ENCODE measurements at regions of chr6 and their contacts with region 1.

Region 1: DNA sequence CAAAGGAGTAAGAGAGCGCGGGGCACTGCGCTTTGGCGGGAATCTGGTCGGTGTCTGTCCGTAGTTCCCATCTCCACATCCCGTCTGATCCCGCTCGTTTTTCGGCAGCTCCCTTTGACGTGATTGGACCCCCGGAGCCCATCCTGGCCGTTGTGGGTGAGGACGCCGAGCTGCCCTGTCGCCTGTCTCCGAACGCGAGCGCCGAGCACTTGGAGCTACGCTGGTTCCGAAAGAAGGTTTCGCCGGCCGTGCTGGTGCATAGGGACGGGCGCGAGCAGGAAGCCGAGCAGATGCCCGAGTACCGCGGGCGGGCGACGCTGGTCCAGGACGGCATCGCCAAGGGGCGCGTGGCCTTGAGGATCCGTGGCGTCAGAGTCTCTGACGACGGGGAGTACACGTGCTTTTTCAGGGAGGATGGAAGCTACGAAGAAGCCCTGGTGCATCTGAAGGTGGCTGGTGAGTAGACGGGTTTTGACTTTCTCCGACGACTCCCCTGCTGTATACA is 1.4 kb downstream of the BTN1A1 start:
- DNase-seq: peak; percentile 65
- ATAC-seq: peak; percentile 66
- H3K4me3 ChIP-seq: peak overlapping the region; percentile 8 to 65 (median 56)
- H3K4me3 Mint-ChIP-seq: peak overlapping the region; percentile 90
- H3K27ac ChIP-seq: no peak overlapping the region
- H3K27ac Mint-ChIP-seq: peak overlapping the region; percentile 37
- H3K4me1 ChIP-seq: peaks cover 26 to 27% of the 10 kb centered on the region in 2 donors
- H3K4me1 Mint-ChIP-seq: peaks cover 27% of the 10 kb centered on the region
- H3K27me3 ChIP-seq: peaks cover 0 to 6% (median 0%) of the 10 kb centered on the region in 4 experiments
- H3K27me3 Mint-ChIP-seq: no peaks in the 10 kb centered on the region
- CTCF ChIP-seq: no peak

Region 2: DNA sequence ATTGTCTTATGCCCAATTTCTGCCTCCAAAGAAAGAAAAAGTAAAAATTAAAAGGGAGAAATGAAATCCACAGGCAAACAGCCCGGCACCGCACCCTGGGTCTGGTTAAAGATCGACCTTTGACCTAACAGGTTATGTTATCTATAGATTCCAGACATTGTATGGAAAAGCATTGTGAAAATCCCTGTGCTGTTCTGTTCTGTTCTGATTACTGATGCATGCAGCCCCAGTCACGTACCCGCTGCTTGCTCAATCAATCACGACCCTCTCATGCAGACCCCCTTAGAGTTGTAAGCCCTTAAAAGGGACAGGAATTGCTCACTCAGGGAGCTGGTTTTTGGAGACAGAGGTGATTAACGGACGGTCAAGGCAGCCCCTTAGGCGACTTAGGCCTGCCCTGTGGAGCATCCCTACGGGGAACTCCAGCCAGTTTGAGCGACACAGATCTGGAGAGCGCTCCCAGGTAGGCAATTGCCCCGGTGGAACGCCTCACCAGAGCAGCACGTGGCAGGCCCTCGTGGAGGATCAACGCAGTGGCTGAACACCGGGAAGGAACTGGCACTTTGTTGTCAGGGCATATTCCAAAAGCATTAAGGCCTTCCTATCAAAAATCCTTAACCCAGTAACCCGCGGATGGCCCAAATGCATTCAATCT is 426.3 kb before region 1 on chr6:
- CTCF ChIA-PET with region 1: no interaction called
- POLR2A ChIA-PET with region 1: no interaction called
- intact Hi-C with region 1: no loop called
- DNase-seq: no peak
- ATAC-seq: no peak
- H3K4me3 ChIP-seq: no peak overlapping the region
- H3K4me3 Mint-ChIP-seq: no peak overlapping the region
- H3K27ac ChIP-seq: no peak overlapping the region
- H3K27ac Mint-ChIP-seq: no peak overlapping the region
- H3K4me1 ChIP-seq: no peaks in the 10 kb centered on the region
- H3K4me1 Mint-ChIP-seq: no peaks in the 10 kb centered on the region
- H3K27me3 ChIP-seq: peaks cover 0 to 7% (median 0%) of the 10 kb centered on the region in 4 experiments
- H3K27me3 Mint-ChIP-seq: peaks cover 6% of the 10 kb centered on the region
- CTCF ChIP-seq: no peak

Region 3: GRCh38 chr6:26342106-26343004 is 159.2 kb before region 1 on chr6:
- CTCF ChIA-PET with region 1: interaction called, 3 read pairs
- POLR2A ChIA-PET with region 1: no interaction called
- intact Hi-C with region 1: loop called (anchors 5 kb)
- DNase-seq: no peak
- ATAC-seq: peak; percentile 9
- H3K4me3 ChIP-seq: peak overlapping the region in 1 of 5 experiments; percentile 19
- H3K4me3 Mint-ChIP-seq: peak overlapping the region; percentile 52
- H3K27ac ChIP-seq: no peak overlapping the region
- H3K27ac Mint-ChIP-seq: no peak overlapping the region
- H3K4me1 ChIP-seq: peaks cover 9 to 13% of the 10 kb centered on the region in 2 donors
- H3K4me1 Mint-ChIP-seq: peaks cover 8% of the 10 kb centered on the region
- H3K27me3 ChIP-seq: peaks cover 0 to 33% (median 25%) of the 10 kb centered on the region in 4 experiments
- H3K27me3 Mint-ChIP-seq: peaks cover 47% of the 10 kb centered on the region
- CTCF ChIP-seq: no peak

Region 4: DNA sequence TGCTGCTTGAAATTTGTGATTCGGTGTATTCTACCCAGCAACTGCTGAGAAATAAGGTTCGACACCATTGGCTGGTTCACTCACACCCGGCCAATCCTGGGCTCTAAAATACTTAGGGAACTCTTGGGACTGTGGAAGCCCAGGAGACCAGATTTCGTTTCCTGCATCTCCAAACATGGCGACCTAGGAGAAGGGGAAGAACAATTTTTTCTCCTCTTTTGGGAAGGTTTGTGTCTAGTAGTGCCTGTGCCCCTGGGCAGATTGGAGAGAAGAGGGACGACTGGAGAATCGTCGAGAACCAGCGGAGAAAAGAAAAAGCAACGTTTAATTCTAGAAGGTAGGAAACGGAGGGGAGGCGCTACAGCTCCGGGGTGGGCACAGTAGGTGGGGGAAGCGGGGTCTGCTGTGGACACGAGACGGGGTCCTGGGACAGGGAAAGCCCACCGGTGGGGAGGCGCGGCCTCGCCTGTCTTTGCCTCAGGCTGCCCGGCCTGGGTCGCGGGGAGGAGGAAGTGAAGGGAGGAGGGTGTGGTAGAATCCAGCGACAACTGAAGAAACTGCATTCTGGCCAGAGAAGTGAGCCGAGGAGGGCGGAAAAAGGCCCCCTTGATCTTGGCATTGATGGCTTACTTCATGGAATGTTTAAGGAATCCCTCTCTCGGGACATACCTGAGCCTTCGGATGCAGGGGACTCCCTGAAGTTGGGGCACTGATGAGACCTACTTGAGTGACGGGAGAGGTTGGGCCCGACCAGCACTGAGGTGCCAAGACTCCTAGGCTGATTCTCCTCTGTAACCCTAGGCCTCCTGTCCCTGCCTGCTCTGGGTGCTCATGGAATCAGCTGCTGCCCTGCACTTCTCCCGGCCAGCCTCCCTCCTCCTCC is 43.5 kb before region 1 on chr6 and contains the start of gene BTN2A1:
- CTCF ChIA-PET with region 1: no interaction called
- POLR2A ChIA-PET with region 1: no interaction called
- intact Hi-C with region 1: loop called (anchors 1 kb)
- DNase-seq: peak; percentile 89
- ATAC-seq: peak; percentile 96
- H3K4me3 ChIP-seq: peak within 1 kb of the TSS; percentile 75 to 96 (median 92)
- H3K4me3 Mint-ChIP-seq: peak within 1 kb of the TSS; percentile 100
- H3K27ac ChIP-seq: peak within 1 kb of the TSS; percentile 77 to 89
- H3K27ac Mint-ChIP-seq: peak within 1 kb of the TSS; percentile 98
- H3K4me1 ChIP-seq: peaks cover 30 to 47% of the 10 kb centered on the region in 2 donors
- H3K4me1 Mint-ChIP-seq: peaks cover 72% of the 10 kb centered on the region
- H3K27me3 ChIP-seq: no peaks in the 10 kb centered on the region
- H3K27me3 Mint-ChIP-seq: no peaks in the 10 kb centered on the region
- CTCF ChIP-seq: no peak
- total RNA-seq, gene BTN2A1: 63.3 and 69.6 TPM in 2 replicates